Heart right ventricle (tissue), 16 donors: ENCODE measurements at regions of chr18 and their contacts with region 1.

Region 1: DNA sequence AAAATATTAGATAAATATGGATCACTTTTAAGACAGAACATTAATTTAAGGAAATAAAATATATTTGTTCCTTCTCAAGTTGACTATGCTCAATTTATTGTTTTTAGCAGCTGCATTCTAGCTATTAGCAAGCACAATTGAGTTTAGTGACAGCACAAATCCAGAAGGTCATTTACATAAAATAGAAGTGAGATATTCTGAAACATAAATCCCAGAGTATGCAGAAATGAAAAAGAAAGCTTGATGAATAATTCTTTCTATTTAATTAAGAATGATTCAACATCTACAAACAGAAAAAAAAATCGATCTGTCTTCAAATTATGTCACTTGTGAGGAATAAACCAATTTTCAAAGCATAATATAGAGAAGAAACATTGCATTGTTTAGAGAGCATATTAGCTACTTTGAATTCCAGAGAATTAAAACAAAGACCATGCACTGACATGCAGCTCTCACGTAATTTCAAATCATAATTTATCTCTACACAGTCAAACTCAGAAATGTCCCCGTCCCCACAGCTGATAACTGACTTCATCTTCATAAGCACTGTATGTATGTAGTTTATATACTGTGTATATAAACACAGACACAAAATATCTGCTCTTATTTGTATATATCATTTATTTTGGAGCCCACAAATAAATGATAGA is 458.4 kb downstream of the TMX3 start:
- DNase-seq: no peak
- ATAC-seq: no peak
- H3K4me3 ChIP-seq: no peak overlapping the region
- H3K27ac ChIP-seq: no peak overlapping the region
- H3K4me1 ChIP-seq: no peaks in the 10 kb centered on the region
- H3K27me3 ChIP-seq: no peaks in the 10 kb centered on the region
- CTCF ChIP-seq: no peak

Region 2: DNA sequence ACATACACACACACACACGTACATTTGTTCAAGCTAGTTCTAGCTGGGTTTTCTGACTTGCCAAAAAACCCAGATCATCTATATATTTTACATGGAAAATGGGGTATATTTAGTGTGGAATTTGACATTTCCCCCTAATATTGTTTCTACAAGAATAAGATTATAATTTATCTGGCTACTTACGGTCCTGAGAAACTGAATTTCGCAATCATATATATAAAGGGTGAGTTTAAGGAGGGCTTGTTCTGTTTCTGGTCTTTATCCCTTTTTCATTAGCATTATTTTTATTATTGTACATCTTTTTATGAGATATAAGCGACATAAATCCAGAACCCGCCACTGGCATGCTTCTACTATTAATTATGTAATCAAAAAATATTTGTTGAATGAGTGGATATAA is 70.5 kb before region 1 on chr18:
- intact Hi-C with region 1: loop called in 1 of 10 experiments (anchors 10 kb)
- DNase-seq: no peak
- ATAC-seq: no peak
- H3K4me3 ChIP-seq: no peak overlapping the region
- H3K27ac ChIP-seq: no peak overlapping the region
- H3K4me1 ChIP-seq: no peaks in the 10 kb centered on the region
- H3K27me3 ChIP-seq: no peaks in the 10 kb centered on the region
- CTCF ChIP-seq: no peak

Region 3: DNA sequence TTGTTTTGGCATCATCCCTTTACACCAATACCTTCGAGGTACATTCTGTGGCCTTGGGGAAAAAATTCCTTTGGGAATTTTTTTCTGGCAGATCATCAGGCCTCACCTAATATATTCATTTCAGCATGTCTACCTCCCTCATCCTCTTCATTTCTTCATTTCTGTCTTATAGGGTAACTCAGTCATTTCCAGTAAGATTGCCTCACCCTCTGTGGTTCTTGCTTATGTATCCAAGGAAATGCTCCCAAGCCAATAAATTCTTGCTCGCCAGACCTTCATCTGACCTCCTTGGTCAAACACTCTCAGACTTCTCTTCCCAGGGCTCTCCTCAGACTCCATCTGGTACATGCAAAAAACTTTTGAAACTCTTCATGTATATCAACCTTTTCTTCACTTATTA is 192.7 kb after region 1 on chr18:
- intact Hi-C with region 1: no loop called
- DNase-seq: no peak
- ATAC-seq: peak in 1 of 8 donors; percentile 51
- H3K4me3 ChIP-seq: no peak overlapping the region
- H3K27ac ChIP-seq: peak overlapping the region in 1 of 10 donors; percentile 48
- H3K4me1 ChIP-seq: no peaks in the 10 kb centered on the region
- H3K27me3 ChIP-seq: no peaks in the 10 kb centered on the region
- CTCF ChIP-seq: no peak